Adrenal gland (tissue), 19 donors: ENCODE measurements at regions of chr10 and their contacts with region 1.

Region 1: DNA sequence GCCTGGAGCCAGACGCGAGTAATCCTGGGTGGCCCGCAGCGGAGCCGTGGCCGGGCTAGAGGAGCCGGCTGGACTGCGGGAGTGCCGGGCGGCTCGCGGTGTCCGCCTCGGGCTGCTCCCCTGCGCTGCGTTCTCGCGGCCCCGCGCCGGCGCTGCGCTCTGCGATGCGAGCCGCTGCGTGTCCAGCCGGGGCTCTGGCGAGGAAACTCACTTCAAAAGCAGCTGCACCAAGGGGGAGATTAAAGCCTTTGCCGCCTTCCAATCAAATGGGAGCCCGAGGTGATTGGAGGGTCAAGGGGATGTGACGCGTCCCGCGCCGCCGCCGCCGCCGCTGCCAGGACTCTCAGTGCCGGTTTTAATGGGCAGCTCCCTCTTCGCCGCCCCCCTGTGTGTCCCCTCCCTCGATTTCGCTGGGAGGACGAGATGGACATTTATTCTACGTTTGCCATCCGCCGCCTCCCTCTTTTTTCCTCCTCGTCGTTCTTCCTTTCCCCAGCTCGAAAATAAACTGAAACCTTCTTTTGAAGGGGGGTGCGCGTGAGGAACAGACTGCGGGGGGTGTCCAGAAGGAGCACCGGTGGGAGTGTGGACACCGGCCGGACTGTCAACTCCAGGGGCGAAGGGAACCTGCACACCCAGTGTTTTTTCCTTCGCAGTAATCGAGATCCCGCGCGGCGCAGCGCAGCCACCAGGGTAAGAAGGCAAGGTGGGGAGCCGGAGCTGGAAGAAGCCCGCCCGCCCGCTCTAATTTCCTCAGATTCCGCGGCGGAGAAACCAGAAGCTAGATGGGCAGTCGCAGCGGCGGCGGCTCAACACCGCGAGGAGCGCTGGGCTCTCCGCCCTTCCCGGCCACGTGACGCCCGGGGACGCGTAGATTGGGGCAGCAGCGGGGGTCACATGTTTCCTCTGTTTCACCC is at the start of gene ZNF503:
- DNase-seq: peak; percentile 96 to 99 (median 98)
- H3K4me3 ChIP-seq: peak within 1 kb of the TSS; percentile 72 to 99 (median 85)
- H3K27ac ChIP-seq: peak within 1 kb of the TSS; percentile 92 to 99 (median 95)
- H3K4me1 ChIP-seq: peaks cover 0 to 24% of the 10 kb centered on the region in 2 donors
- H3K27me3 ChIP-seq: no peaks in the 10 kb centered on the region
- CTCF ChIP-seq: peak in 5 of 6 experiments; percentile 16 to 61 (median 53)
- POLR2A ChIP-seq: peak; percentile 96
- total RNA-seq, gene ZNF503: 5.4 to 129 (median 60.1) TPM

Region 2: DNA sequence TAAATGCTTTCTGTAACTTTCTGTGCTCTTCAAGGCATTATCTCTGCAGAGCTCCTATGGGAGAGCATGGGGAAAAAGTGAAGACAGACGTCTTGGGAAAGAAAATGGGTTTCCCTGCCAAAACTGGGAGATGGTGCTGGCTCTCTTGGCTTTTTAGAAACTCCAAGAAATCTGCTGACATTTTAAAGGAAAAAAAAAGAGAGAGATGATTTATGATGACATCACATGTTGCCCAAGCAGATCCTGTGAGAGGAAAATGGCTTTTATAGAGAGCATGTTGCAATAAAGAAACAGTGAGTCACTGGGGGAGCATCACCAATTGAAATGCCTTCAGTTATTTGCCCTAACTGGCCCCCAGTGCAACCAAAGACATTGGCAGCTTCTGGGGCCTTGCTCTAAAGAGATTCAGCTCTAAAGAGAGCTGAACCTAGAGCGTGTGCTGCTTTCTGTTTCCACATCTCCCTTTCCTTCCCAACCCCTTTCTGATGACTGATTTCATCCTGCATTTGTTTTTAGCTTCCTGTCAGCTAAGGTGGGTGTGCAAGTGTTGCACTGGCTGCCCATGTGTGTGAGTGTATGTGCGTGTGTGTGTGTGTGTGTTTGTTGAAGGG is 67.3 kb after region 1 on chr10:
- intact Hi-C with region 1: loop called in 1 of 2 experiments (anchors 10 kb)
- DNase-seq: peak; percentile 57 to 92 (median 86)
- H3K4me3 ChIP-seq: no peak overlapping the region
- H3K27ac ChIP-seq: peak overlapping the region; percentile 42 to 90 (median 70)
- H3K4me1 ChIP-seq: peaks cover 24 to 44% of the 10 kb centered on the region in 2 donors
- H3K27me3 ChIP-seq: no peaks in the 10 kb centered on the region
- CTCF ChIP-seq: no peak
- POLR2A ChIP-seq: peak in 1 of 2 donors; percentile 63

Region 3: GRCh38 chr10:75651417-75651816 is 249.6 kb after region 1 on chr10:
- intact Hi-C with region 1: loop called (anchors 5 to 10 kb)
- DNase-seq: no peak
- H3K4me3 ChIP-seq: no peak overlapping the region
- H3K27ac ChIP-seq: no peak overlapping the region
- H3K4me1 ChIP-seq: peaks cover 23 to 29% of the 10 kb centered on the region in 2 donors
- H3K27me3 ChIP-seq: no peaks in the 10 kb centered on the region
- CTCF ChIP-seq: peak in 1 of 6 experiments; percentile 27
- POLR2A ChIP-seq: no peak

Region 4: DNA sequence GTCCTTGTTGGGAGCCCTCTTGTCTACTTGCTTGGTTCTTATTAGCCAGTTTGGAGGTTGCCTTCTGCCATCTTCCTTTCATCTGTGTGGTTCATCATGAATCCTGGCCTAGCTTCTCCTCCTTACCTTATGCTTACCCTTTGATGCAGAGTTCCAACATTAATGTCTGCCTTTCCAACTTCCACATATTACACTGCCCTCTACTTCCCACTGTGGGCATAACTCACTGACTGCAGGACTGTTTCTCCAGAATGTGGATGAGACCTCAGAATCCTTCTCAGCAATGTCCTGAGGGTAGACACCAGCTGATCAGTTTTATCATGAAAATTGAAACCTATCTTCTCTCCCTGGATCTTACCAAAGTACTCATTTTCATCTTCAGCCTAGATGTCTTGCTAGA is 520.6 kb after region 1 on chr10:
- intact Hi-C with region 1: loop called in 1 of 2 experiments (anchors 10 kb)
- DNase-seq: no peak
- H3K4me3 ChIP-seq: no peak overlapping the region
- H3K27ac ChIP-seq: no peak overlapping the region
- H3K4me1 ChIP-seq: no peaks in the 10 kb centered on the region
- H3K27me3 ChIP-seq: no peaks in the 10 kb centered on the region
- CTCF ChIP-seq: peak in 2 of 6 experiments; percentile 12 to 24
- POLR2A ChIP-seq: no peak

Region 5: DNA sequence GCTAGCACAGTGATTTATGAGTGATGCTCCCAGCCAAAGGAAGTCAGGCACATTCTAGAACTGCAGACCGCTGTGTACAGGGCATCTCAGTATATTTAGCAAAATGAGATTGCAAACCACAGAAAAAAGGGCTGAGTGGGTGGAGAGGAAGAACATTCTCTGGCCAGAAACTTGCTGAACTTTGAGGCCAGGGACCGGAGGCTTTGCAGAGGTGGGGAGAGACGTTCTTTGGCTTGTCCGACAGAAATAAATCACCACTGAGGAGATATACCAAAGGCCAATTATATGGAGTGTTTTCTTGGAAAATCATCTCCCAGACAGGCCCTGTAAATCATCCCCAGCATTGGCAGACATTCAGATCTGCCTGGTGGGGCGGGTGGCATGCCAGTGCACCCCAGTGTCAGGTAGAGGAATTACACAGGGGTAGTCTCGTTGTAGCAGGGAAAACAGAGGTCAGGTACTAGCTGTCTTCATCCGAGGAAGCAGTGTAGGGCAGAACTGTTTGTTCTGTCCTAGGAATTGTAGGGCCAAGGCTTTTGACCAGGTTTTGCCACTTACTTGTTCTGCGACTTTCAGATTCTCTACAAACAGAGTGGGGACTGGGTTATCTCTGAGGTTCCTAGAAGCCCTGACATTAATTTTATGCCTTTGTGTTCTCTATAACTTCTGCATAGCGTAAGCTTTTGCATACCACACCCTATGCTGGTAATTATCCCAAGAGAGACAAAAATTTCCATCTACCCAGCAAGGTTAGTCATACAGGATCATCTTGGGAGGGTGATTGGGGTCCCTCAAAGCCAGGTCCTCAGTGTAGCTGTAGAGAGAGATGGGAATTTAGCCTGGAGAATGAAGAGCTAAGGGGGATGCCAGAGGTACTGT is 685.2 kb after region 1 on chr10:
- intact Hi-C with region 1: loop called in 1 of 2 experiments (anchors 5 kb)
- DNase-seq: peak; percentile 87 to 93 (median 90)
- H3K4me3 ChIP-seq: no peak overlapping the region
- H3K27ac ChIP-seq: peak overlapping the region in 4 of 5 donors; percentile 1 to 74 (median 33)
- H3K4me1 ChIP-seq: peaks cover 10 to 27% of the 10 kb centered on the region in 2 donors
- H3K27me3 ChIP-seq: no peaks in the 10 kb centered on the region
- CTCF ChIP-seq: peak; percentile 71 to 97 (median 90)
- POLR2A ChIP-seq: no peak